CD14-positive monocyte (primary cell): ENCODE measurements at regions of chr1 and their contacts with region 1.

Region 1: GRCh38 chr1:244047621-244048471 is 3.2 kb upstream of the ZBTB18 start:
- DNase-seq: peak; percentile 97 to 100 (median 99)
- H3K4me3 ChIP-seq: peak overlapping the region; percentile 83 to 91 (median 86)
- H3K4me3 Mint-ChIP-seq: peak overlapping the region; percentile 93 to 98
- H3K27ac ChIP-seq: peak overlapping the region; percentile 97 to 99
- H3K27ac Mint-ChIP-seq: peak overlapping the region; percentile 98 to 99 (median 99)
- H3K4me1 ChIP-seq: peaks cover 37 to 40% of the 10 kb centered on the region in 2 donors
- H3K4me1 Mint-ChIP-seq: peaks cover 13% of the 10 kb centered on the region
- H3K27me3 ChIP-seq: no peaks in the 10 kb centered on the region
- H3K27me3 Mint-ChIP-seq: peaks cover 0 to 2% (median 0%) of the 10 kb centered on the region in 3 donors
- CTCF ChIP-seq: no peak

Region 2: GRCh38 chr1:243471754-243472745 is 575.8 kb before region 1 on chr1:
- intact Hi-C with region 1: loop called in 1 of 2 experiments (anchors 10 kb)
- DNase-seq: peak; percentile 62 to 86 (median 80)
- H3K4me3 ChIP-seq: peak overlapping the region in 1 of 3 experiments; percentile 57
- H3K4me3 Mint-ChIP-seq: peak overlapping the region in 1 of 2 donors; percentile 72
- H3K27ac ChIP-seq: peak overlapping the region; percentile 72 to 80
- H3K27ac Mint-ChIP-seq: peak overlapping the region; percentile 85 to 93 (median 92)
- H3K4me1 ChIP-seq: peaks cover 42 to 53% of the 10 kb centered on the region in 2 donors
- H3K4me1 Mint-ChIP-seq: peaks cover 52% of the 10 kb centered on the region
- H3K27me3 ChIP-seq: no peaks in the 10 kb centered on the region
- H3K27me3 Mint-ChIP-seq: peaks cover 0 to 10% (median 0%) of the 10 kb centered on the region in 3 donors
- CTCF ChIP-seq: no peak

Region 3: GRCh38 chr1:243727503-243728203 is 320.2 kb before region 1 on chr1:
- intact Hi-C with region 1: loop called (anchors 10 kb)
- DNase-seq: peak; percentile 84 to 94 (median 90)
- H3K4me3 ChIP-seq: peak overlapping the region in 2 of 3 experiments; percentile 12 to 58
- H3K4me3 Mint-ChIP-seq: peak overlapping the region; percentile 14 to 66
- H3K27ac ChIP-seq: peak overlapping the region; percentile 79 to 97
- H3K27ac Mint-ChIP-seq: peak overlapping the region; percentile 96 to 100 (median 98)
- H3K4me1 ChIP-seq: peaks cover 68 to 91% of the 10 kb centered on the region in 2 donors
- H3K4me1 Mint-ChIP-seq: peaks cover 87% of the 10 kb centered on the region
- H3K27me3 ChIP-seq: no peaks in the 10 kb centered on the region
- H3K27me3 Mint-ChIP-seq: no peaks in the 10 kb centered on the region
- CTCF ChIP-seq: no peak

Region 4: DNA sequence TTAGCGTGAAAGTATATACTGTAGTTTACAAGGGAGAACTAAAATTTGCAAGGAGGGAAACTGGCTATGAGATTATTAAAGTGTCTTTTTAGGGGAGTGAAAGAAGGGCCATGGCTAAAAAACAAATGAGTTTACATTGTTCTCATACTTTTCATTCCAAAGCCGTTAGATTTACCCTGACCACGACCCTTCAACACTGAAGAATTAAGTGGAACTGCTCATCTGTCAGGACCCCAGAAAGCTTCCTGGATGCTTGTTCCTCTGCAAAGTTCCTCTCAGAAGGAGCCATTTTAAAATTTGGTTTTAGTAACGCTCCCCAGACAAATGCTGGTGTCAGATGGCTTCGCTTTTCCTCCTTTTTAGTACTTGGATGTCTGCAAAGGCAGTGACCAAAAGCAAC is 79.4 kb before region 1 on chr1:
- intact Hi-C with region 1: loop called in 1 of 2 experiments (anchors 5 kb)
- DNase-seq: no peak
- H3K4me3 ChIP-seq: no peak overlapping the region
- H3K4me3 Mint-ChIP-seq: no peak overlapping the region
- H3K27ac ChIP-seq: no peak overlapping the region
- H3K27ac Mint-ChIP-seq: no peak overlapping the region
- H3K4me1 ChIP-seq: peaks cover 20 to 23% of the 10 kb centered on the region in 2 donors
- H3K4me1 Mint-ChIP-seq: peaks cover 23% of the 10 kb centered on the region
- H3K27me3 ChIP-seq: no peaks in the 10 kb centered on the region
- H3K27me3 Mint-ChIP-seq: peaks cover 0 to 3% (median 1%) of the 10 kb centered on the region in 3 donors
- CTCF ChIP-seq: no peak

Region 5: DNA sequence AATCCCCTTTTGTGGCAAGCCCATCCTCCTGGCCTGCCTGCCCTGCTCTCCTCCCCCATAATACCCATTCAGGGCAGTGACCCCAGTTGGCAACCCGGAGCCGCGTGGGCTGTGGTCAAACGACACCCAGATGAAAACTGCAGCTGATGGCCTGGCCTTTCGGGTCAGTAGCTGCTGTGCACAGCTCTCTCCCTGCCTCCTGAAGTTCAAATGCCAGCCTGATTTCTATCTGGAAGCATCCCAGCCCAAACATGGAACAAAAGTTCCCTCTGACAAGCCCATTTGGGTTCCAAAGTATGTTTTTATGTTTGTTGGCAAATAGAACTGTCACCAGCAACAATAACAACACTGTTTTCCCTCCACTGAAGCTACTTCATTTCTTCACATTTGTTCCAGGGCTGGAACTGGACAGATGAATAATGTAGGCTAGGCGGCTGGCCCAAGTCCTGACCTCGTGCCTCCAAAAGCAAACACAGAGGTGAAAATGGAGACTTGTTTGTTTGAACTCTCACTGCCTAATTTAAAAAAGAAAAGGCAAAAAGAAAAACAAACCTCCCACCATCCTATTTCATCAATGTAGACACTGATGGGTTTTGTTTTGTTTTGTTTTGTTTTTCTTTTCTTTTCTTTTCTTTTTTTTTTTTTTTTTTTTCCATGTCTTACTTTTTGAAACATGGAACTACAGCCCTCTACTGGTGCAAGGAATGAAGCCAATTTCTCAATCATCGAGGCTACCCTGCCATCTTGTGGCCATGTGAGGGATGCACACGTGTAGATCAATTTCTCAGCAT is 224.8 kb after region 1 on chr1:
- intact Hi-C with region 1: loop called (anchors 5 to 10 kb)
- DNase-seq: peak; percentile 78 to 87 (median 82)
- H3K4me3 ChIP-seq: no peak overlapping the region
- H3K4me3 Mint-ChIP-seq: no peak overlapping the region
- H3K27ac ChIP-seq: peak overlapping the region in 1 of 2 donors; percentile 80
- H3K27ac Mint-ChIP-seq: peak overlapping the region in 5 of 7 donors; percentile 23 to 85 (median 72)
- H3K4me1 ChIP-seq: peaks cover 13 to 23% of the 10 kb centered on the region in 2 donors
- H3K4me1 Mint-ChIP-seq: peaks cover 36% of the 10 kb centered on the region
- H3K27me3 ChIP-seq: no peaks in the 10 kb centered on the region
- H3K27me3 Mint-ChIP-seq: peaks cover 2 to 3% (median 2%) of the 10 kb centered on the region in 3 donors
- CTCF ChIP-seq: peak; percentile 99

Region 6: GRCh38 chr1:244451951-244452795 is 404.3 kb after region 1 on chr1:
- intact Hi-C with region 1: loop called in 1 of 2 experiments (anchors 5 kb)
- DNase-seq: peak; percentile 98 to 99 (median 99)
- H3K4me3 ChIP-seq: peak overlapping the region; percentile 8 to 94 (median 89)
- H3K4me3 Mint-ChIP-seq: peak overlapping the region; percentile 88 to 91
- H3K27ac ChIP-seq: peak overlapping the region; percentile 92 to 93
- H3K27ac Mint-ChIP-seq: peak overlapping the region in 6 of 7 donors; percentile 58 to 87 (median 76)
- H3K4me1 ChIP-seq: peaks cover 27 to 39% of the 10 kb centered on the region in 2 donors
- H3K4me1 Mint-ChIP-seq: peaks cover 36% of the 10 kb centered on the region
- H3K27me3 ChIP-seq: no peaks in the 10 kb centered on the region
- H3K27me3 Mint-ChIP-seq: no peaks in the 10 kb centered on the region
- CTCF ChIP-seq: peak; percentile 43

Region 7: DNA sequence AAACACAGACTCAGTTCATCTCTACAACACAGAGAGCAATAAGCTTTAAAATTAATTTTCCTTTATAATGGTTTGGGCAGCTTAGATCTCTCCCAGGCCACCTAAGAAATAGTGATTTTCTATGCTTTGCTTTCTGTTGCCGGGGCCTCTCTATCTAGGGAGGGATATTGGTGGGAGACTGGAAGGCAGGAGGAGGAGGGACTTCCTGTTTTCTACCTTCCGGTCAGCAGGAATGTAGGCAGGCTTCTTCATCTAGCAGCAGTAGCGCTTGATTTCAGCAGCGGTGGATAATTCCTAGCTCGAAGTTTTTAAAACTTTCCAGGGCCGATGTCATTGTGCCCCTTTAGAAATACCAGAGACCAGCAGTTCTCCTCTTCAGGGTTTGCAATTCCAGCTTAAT is 600.0 kb after region 1 on chr1:
- intact Hi-C with region 1: loop called in 1 of 2 experiments (anchors 10 kb)
- DNase-seq: no peak
- H3K4me3 ChIP-seq: no peak overlapping the region
- H3K4me3 Mint-ChIP-seq: no peak overlapping the region
- H3K27ac ChIP-seq: no peak overlapping the region
- H3K27ac Mint-ChIP-seq: no peak overlapping the region
- H3K4me1 ChIP-seq: peaks cover 6% of the 10 kb centered on the region in 2 donors
- H3K4me1 Mint-ChIP-seq: peaks cover 8% of the 10 kb centered on the region
- H3K27me3 ChIP-seq: no peaks in the 10 kb centered on the region
- H3K27me3 Mint-ChIP-seq: peaks cover 2 to 5% (median 4%) of the 10 kb centered on the region in 3 donors
- CTCF ChIP-seq: no peak